AG04449 (cell line): ENCODE measurements at regions of chr14 and their contacts with region 1.

Region 1: DNA sequence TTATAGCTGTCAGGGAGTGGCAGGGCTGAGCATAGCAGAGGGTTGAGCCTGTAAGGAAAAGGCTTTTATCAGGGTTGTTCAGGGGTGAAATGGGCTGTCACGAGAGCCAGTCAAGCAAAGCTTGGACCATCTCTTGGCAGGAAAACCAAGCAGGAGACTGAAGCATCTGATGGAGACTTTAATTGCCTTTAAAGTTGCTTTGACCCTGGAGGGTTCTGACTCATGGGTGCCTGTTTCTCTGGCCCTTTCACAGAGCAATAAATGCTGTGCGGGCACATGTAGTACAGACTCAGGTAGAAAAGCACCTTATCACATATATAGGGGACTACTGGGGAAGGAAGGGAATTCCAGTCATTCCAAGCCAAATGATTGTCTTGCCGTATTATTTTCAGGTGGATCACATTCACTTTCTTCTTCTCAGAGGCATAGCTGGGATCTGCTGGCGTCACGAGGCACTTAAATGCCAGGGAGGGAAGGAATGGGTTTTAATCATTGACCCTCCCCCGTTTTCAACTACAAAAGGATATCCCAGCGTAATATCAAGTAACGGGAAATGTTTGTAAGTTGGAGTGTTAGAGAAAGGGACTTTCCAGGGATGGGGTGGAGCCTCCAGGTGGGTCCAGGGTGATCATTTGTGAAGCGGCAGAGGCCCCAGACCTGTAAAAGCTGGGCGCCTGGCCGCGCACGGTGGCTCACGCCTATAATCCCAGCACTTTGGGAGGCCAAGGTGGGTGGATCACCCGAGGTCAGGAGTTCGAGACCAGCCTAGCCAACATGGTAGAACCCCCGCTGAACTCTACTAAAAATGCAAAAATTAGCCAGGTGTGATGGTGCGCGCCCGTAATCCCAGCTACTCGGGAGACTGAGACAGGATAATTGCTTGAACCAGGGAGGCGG is 34.9 kb downstream of the PLEKHD1 start:
- DNase-seq: no peak
- H3K4me3 ChIP-seq: no peak overlapping the region
- CTCF ChIP-seq: no peak

Region 2: GRCh38 chr14:69535230-69535848 is 15.9 kb after region 1 on chr14:
- CTCF ChIA-PET with region 1: interaction called, 24 read pairs
- POLR2A ChIA-PET with region 1: no interaction called
- DNase-seq: no peak
- H3K4me3 ChIP-seq: no peak overlapping the region
- CTCF ChIP-seq: peak; percentile 80

Region 3: GRCh38 chr14:69554500-69554899 is 35.0 kb after region 1 on chr14:
- CTCF ChIA-PET with region 1: no interaction called
- POLR2A ChIA-PET with region 1: no interaction called
- DNase-seq: no peak
- H3K4me3 ChIP-seq: no peak overlapping the region
- CTCF ChIP-seq: no peak

Region 4: DNA sequence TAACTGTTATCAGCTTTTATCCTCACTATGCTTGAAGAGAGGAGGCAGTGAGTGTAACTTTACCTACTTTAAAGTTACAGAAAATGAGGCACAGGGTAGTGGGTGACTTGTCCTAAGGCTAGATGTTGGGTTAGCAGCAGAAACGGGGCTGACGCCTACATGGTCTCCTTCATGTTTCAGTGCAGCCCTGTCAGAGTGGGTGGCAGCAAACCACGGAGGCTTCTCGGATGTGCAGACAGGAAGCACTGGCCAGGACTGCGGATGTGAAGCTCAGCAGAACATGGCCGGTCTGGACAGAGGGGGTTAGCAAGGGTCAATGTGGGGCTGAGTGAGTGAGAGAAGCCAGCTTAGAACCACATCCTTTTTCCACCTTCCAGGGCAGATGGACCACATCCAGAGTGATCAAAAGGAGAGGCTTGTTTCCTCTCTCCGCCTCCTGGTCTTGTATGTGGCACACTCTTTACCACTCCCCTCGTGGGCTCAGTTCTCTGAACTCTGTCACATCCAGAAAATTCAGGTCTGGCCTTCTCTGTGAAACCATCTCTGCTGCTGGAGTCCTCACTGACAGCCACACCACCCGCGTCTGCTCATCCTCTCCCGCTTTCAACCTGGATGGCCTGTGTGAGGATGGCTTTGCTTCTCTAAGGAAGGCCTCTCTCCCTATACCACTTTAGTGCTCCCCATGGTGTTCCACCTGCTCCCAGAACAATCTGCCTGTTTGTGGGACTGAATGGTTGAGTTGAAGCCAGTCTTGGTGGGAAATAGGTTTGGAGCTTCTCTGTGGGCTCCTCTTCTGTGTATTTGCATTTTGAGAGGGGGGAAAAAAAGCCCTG is 106.1 kb after region 1 on chr14:
- CTCF ChIA-PET with region 1: no interaction called
- POLR2A ChIA-PET with region 1: no interaction called
- DNase-seq: no peak
- H3K4me3 ChIP-seq: no peak overlapping the region
- CTCF ChIP-seq: no peak